ENCODE measurements at regions of chr2 and their contacts with region 1.

Region 1: DNA sequence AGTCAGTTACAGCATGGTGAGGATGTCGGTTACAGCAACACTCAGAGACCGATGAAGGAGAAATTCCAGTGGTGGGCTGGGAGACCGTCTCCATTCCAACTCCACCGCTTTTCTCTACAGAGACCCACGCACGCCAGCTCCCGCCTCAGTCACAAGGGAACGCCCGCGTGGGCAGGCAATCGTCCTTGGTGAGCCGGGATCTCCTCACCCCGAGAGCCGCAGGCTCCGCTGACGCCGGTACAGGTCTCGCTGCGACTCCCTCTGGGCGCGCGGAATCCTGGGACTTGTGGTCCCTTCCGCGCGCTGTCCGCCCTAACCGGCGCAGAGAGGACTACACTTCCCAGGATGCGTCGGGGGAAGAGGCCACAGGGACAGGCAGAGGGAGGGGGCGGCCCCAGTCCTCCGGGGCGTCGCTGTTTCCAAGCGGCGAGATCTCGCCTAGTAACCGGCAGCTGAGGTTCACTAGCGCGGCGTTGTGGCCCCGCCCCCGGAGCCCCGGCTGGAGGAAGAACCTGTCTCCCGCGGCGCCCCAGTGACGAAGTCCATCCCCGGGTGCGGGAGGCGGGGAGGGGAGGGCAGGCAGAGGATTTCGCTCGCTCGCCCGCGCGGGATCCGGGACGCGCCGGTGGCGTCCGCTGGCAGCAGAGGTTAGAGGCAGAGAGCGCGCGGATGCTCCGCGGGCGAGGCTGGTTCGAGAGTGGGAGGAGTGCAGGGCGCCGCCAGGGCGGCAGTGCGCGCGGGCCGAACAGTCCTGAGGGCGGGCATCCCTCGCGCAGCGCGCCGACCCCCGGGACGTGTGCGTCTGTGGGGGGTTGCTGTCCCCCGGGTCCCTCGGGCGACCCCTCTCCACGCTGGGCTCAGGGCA is at the start of gene EML6:
- DNase-seq: peak; percentile 95
- ATAC-seq: peak; percentile 99
- H3K4me3 ChIP-seq: peak within 1 kb of the TSS; percentile 85 to 90
- H3K27ac ChIP-seq: peak within 1 kb of the TSS; percentile 92
- H3K4me1 ChIP-seq: peaks cover 11% of the 10 kb centered on the region
- H3K27me3 ChIP-seq: peaks cover 4% of the 10 kb centered on the region; the same call in 1 of the 2 replicates
- CTCF ChIP-seq: peak; percentile 51
- total RNA-seq, gene EML6: 6.3 TPM

Region 2: DNA sequence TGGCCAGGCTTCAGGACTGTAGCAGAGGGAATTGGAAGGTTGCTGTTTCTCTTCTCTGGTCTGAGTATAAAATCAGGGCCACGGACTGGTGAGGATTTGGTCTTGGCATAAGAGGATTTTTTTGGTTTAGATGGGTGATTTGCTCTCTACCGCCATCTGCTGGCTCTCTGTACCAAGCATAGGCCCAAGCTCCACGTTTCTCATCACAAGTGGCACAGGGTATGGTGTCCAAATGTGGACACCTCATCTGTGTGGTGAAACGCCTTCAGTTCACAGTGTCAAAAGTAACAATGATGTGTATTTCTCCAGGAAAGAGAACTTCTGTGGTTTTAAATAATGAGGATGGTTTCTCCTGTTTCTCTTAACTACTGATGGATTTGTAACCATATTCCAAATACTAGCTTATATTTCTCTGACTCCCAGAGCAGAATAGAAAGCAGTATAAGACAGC is 115.2 kb after region 1 on chr2:
- CTCF ChIA-PET with region 1: no interaction called
- POLR2A ChIA-PET with region 1: no interaction called
- in situ Hi-C with region 1: no loop called
- intact Hi-C with region 1: loop called (anchors 5 kb)
- DNase-seq: peak; percentile 80
- ATAC-seq: peak; percentile 94
- H3K4me3 ChIP-seq: no peak overlapping the region
- H3K27ac ChIP-seq: no peak overlapping the region
- H3K4me1 ChIP-seq: no peaks in the 10 kb centered on the region
- H3K27me3 ChIP-seq: no peaks in the 10 kb centered on the region
- CTCF ChIP-seq: peak; percentile 95

Region 3: DNA sequence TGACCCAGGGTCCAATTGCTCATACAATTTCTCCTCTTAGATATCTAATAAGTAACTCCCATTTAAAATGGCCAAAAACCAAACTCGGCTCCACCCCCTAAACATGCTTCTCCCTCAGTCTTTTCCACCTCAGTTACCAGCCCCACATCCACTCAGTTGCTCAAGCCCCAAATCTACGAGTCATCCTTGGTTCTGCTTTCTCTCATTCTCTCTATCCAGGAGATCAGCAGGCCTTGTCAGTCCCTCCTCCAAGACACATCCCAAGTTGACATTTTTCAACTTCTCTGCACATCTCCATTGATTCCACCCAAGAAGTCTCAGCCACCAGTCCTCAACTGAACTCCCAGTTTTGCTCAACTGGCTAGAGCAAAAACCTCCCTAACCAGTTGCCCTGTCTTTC is 367.3 kb after region 1 on chr2:
- CTCF ChIA-PET with region 1: no interaction called
- POLR2A ChIA-PET with region 1: no interaction called
- in situ Hi-C with region 1: no loop called
- intact Hi-C with region 1: no loop called
- DNase-seq: no peak
- ATAC-seq: no peak
- H3K4me3 ChIP-seq: no peak overlapping the region
- H3K27ac ChIP-seq: no peak overlapping the region
- H3K4me1 ChIP-seq: peaks cover 3% of the 10 kb centered on the region; the same call in 1 of the 2 replicates
- H3K27me3 ChIP-seq: no peaks in the 10 kb centered on the region
- CTCF ChIP-seq: no peak